Esophagus muscularis mucosa (tissue), 4 donors: ENCODE measurements at regions of chr22 and their contacts with region 1.

Region 1: DNA sequence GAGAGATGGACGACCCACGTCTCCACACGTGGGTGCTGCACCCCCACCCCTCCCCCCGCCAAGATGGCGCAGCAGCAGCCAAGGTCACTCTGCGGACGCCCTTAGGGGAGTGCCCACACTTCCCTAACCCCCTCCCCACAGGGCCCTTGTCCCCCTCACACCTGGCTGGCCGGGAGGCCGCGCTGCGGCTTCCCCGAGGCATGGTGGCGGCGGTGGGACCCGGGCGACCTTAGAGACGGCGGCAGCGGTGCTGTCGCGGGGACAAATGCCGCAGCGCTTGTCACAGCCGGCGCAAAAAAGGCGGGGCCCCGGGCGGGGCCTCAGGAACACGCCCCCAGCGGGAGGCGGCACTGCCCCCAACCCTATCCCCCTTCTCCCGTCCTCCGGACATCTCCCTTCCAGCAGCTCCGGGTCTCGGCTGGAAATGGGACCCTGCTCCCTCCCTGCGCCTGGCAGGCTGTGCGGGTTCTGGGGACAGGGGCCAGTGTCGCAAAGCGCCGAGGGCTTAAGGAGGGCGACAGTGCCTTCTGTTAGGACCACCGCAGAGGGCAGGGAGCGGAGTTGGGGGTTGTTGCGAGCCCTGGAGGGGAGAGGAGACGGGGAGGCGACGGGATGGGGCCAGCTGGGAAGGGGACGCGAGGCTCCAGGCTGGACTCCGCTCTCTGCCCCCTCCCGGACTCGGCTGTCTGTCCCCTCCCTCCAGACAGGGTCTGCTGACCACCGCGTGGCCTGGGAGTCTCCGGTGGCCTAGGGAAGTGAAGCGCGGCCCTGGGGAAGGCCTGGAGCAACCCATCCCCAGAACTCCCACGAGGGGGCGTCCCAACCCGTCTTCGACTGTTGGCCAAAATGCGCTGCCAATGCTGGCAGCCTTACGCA is at the start of gene CHCHD10:
- DNase-seq: peak; percentile 95
- H3K4me3 ChIP-seq: peak within 1 kb of the TSS; percentile 63 to 72 (median 71)
- H3K27ac ChIP-seq: peak within 1 kb of the TSS; percentile 87 to 91 (median 90)
- H3K4me1 ChIP-seq: peaks cover 52 to 96% (median 90%) of the 10 kb centered on the region in 4 donors
- H3K27me3 ChIP-seq: no peaks in the 10 kb centered on the region
- CTCF ChIP-seq: peak; percentile 79 to 89 (median 86)
- EP300 ChIP-seq: no peak
- POLR2A ChIP-seq: peak; percentile 79
- total RNA-seq, gene CHCHD10: 22.9 to 97.7 (median 44.6) TPM

Region 2: GRCh38 chr22:23786752-23787599 is 19.1 kb after region 1 on chr22 and contains the start of gene SMARCB1:
- intact Hi-C with region 1: loop called (anchors 2 kb)
- DNase-seq: peak; percentile 96
- H3K4me3 ChIP-seq: peak within 1 kb of the TSS; percentile 78 to 96 (median 91)
- H3K27ac ChIP-seq: peak within 1 kb of the TSS; percentile 95 to 100 (median 99)
- H3K4me1 ChIP-seq: peaks cover 31 to 64% (median 58%) of the 10 kb centered on the region in 4 donors
- H3K27me3 ChIP-seq: no peaks in the 10 kb centered on the region
- CTCF ChIP-seq: peak in 1 of 3 experiments; percentile 26
- EP300 ChIP-seq: no peak
- POLR2A ChIP-seq: peak; percentile 71
- total RNA-seq, gene SMARCB1: 28.8 to 55.6 (median 34.9) TPM

Region 3: GRCh38 chr22:23849009-23850006 is 81.4 kb after region 1 on chr22:
- intact Hi-C with region 1: loop called (anchors 5 kb)
- DNase-seq: no peak
- H3K4me3 ChIP-seq: peak overlapping the region in 3 of 4 donors; percentile 24 to 44 (median 26)
- H3K27ac ChIP-seq: no peak overlapping the region
- H3K4me1 ChIP-seq: peaks cover 35 to 40% (median 37%) of the 10 kb centered on the region in 4 donors
- H3K27me3 ChIP-seq: no peaks in the 10 kb centered on the region
- CTCF ChIP-seq: peak in 2 of 3 experiments; percentile 97 to 98
- EP300 ChIP-seq: no peak
- POLR2A ChIP-seq: no peak